Calu3 (cell line): ENCODE measurements at regions of chr3 and their contacts with region 1.

Region 1: GRCh38 chr3:146640955-146641867 is 36.1 kb upstream of the PLSCR5 start:
- DNase-seq: peak; percentile 56
- H3K4me3 Mint-ChIP-seq: no peak overlapping the region
- H3K27ac Mint-ChIP-seq: no peak overlapping the region
- H3K4me1 Mint-ChIP-seq: no peaks in the 10 kb centered on the region
- H3K27me3 Mint-ChIP-seq: no peaks in the 10 kb centered on the region
- CTCF ChIP-seq: peak; percentile 74

Region 2: GRCh38 chr3:146189519-146190173 is 451.6 kb before region 1 on chr3:
- CTCF ChIA-PET with region 1: interaction called, 4 read pairs
- intact Hi-C with region 1: loop called (anchors 1 kb)
- DNase-seq: peak; percentile 57
- H3K4me3 Mint-ChIP-seq: peak overlapping the region; percentile 26
- H3K27ac Mint-ChIP-seq: peak overlapping the region; percentile 66
- H3K4me1 Mint-ChIP-seq: peaks cover 14% of the 10 kb centered on the region
- H3K27me3 Mint-ChIP-seq: no peaks in the 10 kb centered on the region
- CTCF ChIP-seq: peak; percentile 81

Region 3: DNA sequence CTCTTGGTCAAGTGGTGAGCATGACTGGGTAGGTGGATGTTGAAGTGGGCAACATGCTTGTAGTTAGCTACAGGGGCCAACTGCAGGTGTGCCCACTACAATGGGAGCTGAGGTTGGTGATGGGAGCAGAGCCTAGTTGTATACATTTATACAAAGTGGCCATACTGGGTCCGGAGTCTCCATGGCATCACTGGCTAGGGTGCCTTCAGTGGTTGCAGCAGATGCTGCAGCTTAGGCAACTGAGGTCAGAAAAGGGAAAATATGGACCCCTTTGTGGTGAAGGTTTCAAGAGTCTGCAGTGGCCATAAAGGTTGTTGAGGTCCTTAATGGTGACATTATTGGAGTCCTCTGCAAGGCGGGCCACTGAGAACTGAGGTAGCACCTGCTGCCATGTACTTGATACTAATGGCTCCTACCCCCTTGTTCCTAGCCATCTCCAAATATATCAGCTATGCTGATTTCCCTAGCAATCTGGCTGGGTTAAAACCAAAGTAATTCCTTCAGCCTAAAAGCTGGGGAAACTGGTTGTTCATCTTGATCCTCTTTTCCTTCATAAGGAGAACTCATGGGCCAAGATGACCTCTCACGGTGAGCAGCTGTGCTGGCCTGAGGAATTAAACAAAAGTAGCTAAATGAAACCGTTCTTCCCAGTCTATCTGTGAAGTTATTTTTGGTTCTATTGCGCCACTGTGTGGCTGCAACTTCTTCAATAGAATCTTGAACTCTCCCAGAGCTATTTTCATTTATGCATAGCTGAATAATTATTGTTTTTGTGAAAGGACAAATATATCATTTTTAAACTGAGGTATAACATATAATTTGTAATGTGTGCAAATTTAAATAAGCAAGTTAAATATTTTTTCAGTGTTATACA is 314.3 kb before region 1 on chr3:
- CTCF ChIA-PET with region 1: interaction called, 4 read pairs
- intact Hi-C with region 1: loop called (anchors 2 kb)
- DNase-seq: peak; percentile 55
- H3K4me3 Mint-ChIP-seq: no peak overlapping the region
- H3K27ac Mint-ChIP-seq: no peak overlapping the region
- H3K4me1 Mint-ChIP-seq: no peaks in the 10 kb centered on the region
- H3K27me3 Mint-ChIP-seq: no peaks in the 10 kb centered on the region
- CTCF ChIP-seq: peak; percentile 60

Region 4: DNA sequence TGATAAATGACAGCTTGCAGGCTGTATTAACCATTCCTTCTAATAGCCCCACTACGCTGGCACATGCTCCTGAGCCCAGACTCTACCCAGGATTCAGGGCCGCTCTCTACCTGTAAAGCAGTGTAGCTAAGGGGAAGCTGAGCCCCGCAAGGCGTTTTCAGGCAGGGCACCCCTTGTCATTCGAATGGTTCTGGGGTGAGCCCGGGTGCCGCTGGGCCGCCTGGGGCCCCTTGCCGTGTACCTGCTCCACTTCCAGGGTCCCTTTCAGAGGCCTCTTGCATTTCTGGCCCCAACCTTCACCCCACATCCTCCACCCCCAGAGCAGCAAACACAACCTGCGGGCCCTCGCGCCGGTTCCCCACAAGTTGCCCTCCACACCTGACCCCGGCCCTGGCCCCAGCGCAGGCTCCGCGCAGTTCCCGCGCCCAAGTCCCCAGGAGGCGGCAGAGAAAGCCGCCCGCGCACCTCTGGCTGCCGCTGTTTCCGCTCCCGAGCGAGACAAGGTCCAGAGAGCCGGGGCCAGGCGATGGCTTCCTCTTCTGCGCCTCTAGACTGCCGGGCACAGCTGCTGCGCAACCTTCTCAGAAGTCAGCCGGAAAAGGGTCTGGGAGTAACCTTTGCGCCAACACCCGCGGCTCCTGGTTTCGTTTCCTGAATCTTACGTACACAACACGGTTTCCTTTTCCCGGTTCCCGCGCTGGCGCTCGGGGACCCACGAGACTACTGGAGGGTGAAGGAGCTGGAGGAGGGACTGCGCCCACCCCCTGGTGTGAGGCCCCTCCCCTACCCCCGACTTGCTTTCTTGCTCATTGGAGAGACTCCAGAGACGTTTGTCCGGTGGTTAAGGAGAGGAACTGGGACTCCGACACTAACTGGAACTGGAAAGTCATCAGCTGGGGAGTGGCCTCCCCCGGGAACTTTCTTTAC is 96.9 kb before region 1 on chr3 and contains the start of gene PLSCR1:
- CTCF ChIA-PET with region 1: interaction called, 3 read pairs
- intact Hi-C with region 1: loop called (anchors 1 kb)
- DNase-seq: peak; percentile 99
- H3K4me3 Mint-ChIP-seq: peak within 1 kb of the TSS; percentile 87
- H3K27ac Mint-ChIP-seq: peak within 1 kb of the TSS; percentile 91
- H3K4me1 Mint-ChIP-seq: peaks cover 51% of the 10 kb centered on the region
- H3K27me3 Mint-ChIP-seq: no peaks in the 10 kb centered on the region
- CTCF ChIP-seq: no peak
- total RNA-seq, gene PLSCR1: 887 and 1,018 TPM in 2 replicates

Region 5: GRCh38 chr3:146817704-146818103 is 176.5 kb after region 1 on chr3:
- CTCF ChIA-PET with region 1: no interaction called
- intact Hi-C with region 1: loop called (anchors 2 kb)
- DNase-seq: no peak
- H3K4me3 Mint-ChIP-seq: no peak overlapping the region
- H3K27ac Mint-ChIP-seq: no peak overlapping the region
- H3K4me1 Mint-ChIP-seq: no peaks in the 10 kb centered on the region
- H3K27me3 Mint-ChIP-seq: no peaks in the 10 kb centered on the region
- CTCF ChIP-seq: peak; percentile 32

Region 6: GRCh38 chr3:147191795-147192385 is 550.7 kb after region 1 on chr3:
- CTCF ChIA-PET with region 1: no interaction called
- intact Hi-C with region 1: loop called (anchors 1 kb)
- DNase-seq: peak; percentile 81
- H3K4me3 Mint-ChIP-seq: no peak overlapping the region
- H3K27ac Mint-ChIP-seq: no peak overlapping the region
- H3K4me1 Mint-ChIP-seq: no peaks in the 10 kb centered on the region
- H3K27me3 Mint-ChIP-seq: no peaks in the 10 kb centered on the region
- CTCF ChIP-seq: peak; percentile 97